Esophagus muscularis mucosa (tissue), 4 donors: ENCODE measurements at regions of chr6 and their contacts with region 1.

Region 1: DNA sequence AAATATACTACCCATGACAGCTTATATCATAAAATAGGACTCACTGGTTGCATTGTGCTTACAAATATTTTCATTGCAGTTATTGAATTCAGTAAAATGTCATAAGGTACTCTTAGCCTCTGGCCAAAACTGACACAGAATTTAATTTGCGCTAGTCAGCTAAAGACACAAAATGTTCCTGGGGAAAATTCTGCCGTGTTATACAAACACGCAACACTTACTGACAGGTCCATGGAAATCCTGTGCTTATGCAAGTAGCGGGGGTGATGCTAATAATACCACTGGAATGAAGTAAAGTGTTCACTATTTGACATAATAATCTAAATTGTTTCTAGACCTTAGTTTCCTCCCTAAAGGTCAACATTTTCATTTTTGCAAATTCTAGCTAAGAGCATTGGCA is 354.4 kb upstream of the RSPO3 start:
- DNase-seq: no peak
- H3K4me3 ChIP-seq: no peak overlapping the region
- H3K27ac ChIP-seq: peak overlapping the region; percentile 73 to 82 (median 78)
- H3K4me1 ChIP-seq: peaks cover 0 to 74% (median 57%) of the 10 kb centered on the region in 4 donors
- H3K27me3 ChIP-seq: no peaks in the 10 kb centered on the region
- CTCF ChIP-seq: no peak
- EP300 ChIP-seq: peak; percentile 91
- POLR2A ChIP-seq: no peak

Region 2: DNA sequence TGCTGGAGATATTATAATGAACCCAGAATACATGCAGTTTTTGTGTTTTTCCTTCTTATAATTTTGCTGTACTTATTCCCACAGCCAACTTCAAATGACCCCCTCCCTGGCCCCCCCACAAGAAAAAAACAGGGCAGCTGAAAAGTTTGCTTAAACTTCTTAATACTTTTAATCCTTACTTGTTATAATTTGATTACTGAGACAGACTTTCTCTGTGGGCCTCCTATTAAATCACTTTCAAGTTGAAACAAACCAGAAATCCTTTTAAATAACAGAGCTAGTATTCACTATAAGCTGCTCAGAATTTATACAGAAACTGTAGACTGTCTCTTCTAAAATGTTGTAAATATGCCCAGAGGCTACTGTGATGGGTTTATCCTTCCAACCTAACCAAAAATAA is 317.9 kb before region 1 on chr6:
- intact Hi-C with region 1: no loop called
- DNase-seq: no peak
- H3K4me3 ChIP-seq: no peak overlapping the region
- H3K27ac ChIP-seq: peak overlapping the region in 1 of 4 donors; percentile 8
- H3K4me1 ChIP-seq: peaks cover 0 to 6% (median 1%) of the 10 kb centered on the region in 4 donors
- H3K27me3 ChIP-seq: no peaks in the 10 kb centered on the region
- CTCF ChIP-seq: no peak
- EP300 ChIP-seq: no peak
- POLR2A ChIP-seq: no peak

Region 3: GRCh38 chr6:126643352-126643751 is 120.8 kb before region 1 on chr6:
- intact Hi-C with region 1: no loop called
- DNase-seq: no peak
- H3K4me3 ChIP-seq: no peak overlapping the region
- H3K27ac ChIP-seq: no peak overlapping the region
- H3K4me1 ChIP-seq: no peaks in the 10 kb centered on the region
- H3K27me3 ChIP-seq: no peaks in the 10 kb centered on the region
- CTCF ChIP-seq: no peak
- EP300 ChIP-seq: no peak
- POLR2A ChIP-seq: no peak

Region 4: DNA sequence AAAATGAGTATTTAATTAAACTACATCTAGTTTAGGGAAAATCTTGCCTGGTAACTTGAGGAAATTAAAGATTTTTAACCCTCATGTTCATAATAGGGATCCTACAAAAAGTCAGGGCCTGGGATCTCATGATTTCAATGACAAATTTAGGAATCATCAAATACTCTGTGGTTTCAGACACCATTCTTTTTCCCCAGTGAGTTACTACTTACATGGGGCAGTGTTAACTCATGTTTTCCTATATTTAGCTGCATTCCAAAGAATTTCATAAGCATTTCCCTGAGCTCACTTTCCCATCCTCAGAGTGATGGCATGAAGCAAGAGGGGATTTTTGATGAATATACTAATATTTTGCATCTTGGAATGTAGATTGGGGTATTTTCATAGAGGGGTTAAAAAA is 102.5 kb before region 1 on chr6:
- intact Hi-C with region 1: loop called (anchors 10 kb)
- DNase-seq: no peak
- H3K4me3 ChIP-seq: no peak overlapping the region
- H3K27ac ChIP-seq: peak overlapping the region; percentile 70 to 78 (median 72)
- H3K4me1 ChIP-seq: peaks cover 0 to 69% (median 62%) of the 10 kb centered on the region in 4 donors
- H3K27me3 ChIP-seq: no peaks in the 10 kb centered on the region
- CTCF ChIP-seq: no peak
- EP300 ChIP-seq: no peak
- POLR2A ChIP-seq: no peak

Region 5: DNA sequence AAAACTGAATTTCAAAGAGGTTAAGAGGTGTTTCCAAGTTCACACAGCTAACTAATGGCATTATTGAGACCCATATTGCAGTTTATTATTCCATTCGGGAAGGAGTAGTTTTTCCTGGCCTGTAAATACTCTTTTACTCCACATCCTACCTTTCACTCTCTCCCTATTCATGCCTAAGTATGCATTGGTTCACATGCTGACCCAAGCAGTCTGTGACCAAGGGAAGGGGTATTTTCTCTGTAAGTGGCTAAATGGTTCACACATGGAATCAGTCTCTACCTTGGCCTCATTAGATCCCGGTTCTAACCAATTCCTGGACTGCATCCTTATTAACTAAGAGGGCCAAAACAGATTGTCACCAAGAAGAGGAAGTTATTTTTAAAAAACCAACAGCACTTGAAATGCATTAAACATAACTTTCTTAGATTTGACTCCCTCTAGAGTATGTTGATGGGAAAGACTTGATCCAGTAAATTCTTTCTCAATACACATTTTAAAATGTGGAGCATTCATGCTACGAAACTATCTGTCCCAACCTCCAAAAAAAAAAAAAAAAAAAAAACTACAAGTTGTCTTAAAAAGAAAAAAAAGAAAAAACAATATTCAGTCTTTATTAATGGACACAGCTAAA is 336.5 kb after region 1 on chr6:
- intact Hi-C with region 1: loop called (anchors 10 kb)
- DNase-seq: no peak
- H3K4me3 ChIP-seq: no peak overlapping the region
- H3K27ac ChIP-seq: no peak overlapping the region
- H3K4me1 ChIP-seq: peaks cover 0 to 35% (median 25%) of the 10 kb centered on the region in 4 donors
- H3K27me3 ChIP-seq: no peaks in the 10 kb centered on the region
- CTCF ChIP-seq: peak; percentile 13 to 48 (median 30)
- EP300 ChIP-seq: no peak
- POLR2A ChIP-seq: no peak